Activated naive CD4-positive, alpha-beta T cell treated with anti-CD3 and anti-CD28 coated beads for 36 hours (primary cell): ENCODE measurements at regions of chr13 and their contacts with region 1.

Region 1: DNA sequence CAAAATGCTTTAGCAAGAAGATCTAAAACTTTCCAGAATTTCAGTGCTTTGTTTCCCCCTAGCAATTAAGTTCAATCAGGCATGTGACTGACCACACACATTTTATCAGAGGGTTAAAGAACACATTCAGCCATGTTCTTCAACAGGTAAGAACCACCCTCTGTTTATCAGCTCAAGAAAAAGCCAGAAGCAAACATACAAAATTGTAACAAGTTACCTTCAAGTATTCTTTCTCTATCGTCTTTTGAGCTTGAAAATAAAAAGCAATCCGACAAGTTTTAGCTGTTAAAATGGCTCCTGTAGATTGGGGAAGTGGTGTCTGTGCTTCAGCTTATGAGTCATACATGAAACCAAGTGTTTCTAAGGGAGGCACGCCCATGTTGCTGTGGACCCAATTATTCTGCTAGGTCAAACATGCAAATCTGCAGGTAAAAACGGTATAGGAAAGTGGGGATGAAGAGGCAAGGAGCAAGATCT is at the start of gene ELF1:
- DNase-seq: peak; percentile 67
- H3K4me3 Mint-ChIP-seq: peak within 1 kb of the TSS; percentile 89
- H3K27ac Mint-ChIP-seq: peak within 1 kb of the TSS; percentile 99
- H3K4me1 Mint-ChIP-seq: peaks cover 32% of the 10 kb centered on the region
- H3K27me3 Mint-ChIP-seq: no peaks in the 10 kb centered on the region
- total RNA-seq, gene ELF1: 61.7 to 62.3 TPM

Region 2: DNA sequence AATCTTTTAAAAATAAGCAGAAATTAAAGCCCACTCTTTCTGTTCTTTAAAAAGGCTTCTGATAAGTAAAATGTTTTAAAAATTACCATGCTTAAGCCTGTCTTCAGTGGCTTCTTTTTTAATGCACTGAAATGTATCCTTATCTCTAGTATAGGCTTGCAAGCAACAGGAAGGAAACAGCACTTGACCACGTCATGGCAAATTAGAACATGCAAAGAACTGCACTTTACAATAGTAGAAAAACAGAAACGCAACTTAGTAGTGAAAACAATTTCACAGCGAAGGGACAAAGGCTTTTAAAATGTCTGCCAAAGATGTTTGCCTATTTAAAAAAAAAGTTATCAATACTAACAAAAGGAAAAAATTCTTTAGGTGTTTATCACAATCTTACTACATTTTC is 36.3 kb before region 1 on chr13:
- CTCF ChIA-PET with region 1: interaction called, 8 read pairs
- intact Hi-C with region 1: loop called (anchors 1 kb)
- DNase-seq: peak; percentile 60
- H3K4me3 Mint-ChIP-seq: peak overlapping the region; percentile 90
- H3K27ac Mint-ChIP-seq: peak overlapping the region; percentile 100
- H3K4me1 Mint-ChIP-seq: peaks cover 55% of the 10 kb centered on the region
- H3K27me3 Mint-ChIP-seq: no peaks in the 10 kb centered on the region

Region 3: GRCh38 chr13:41029629-41030028 is 10.6 kb after region 1 on chr13:
- CTCF ChIA-PET with region 1: interaction called, 17 read pairs
- intact Hi-C with region 1: no loop called
- DNase-seq: peak; percentile 56
- H3K4me3 Mint-ChIP-seq: no peak overlapping the region
- H3K27ac Mint-ChIP-seq: no peak overlapping the region
- H3K4me1 Mint-ChIP-seq: peaks cover 26% of the 10 kb centered on the region
- H3K27me3 Mint-ChIP-seq: no peaks in the 10 kb centered on the region